ENCODE measurements at regions of chrX and their contacts with region 1.

Region 1: DNA sequence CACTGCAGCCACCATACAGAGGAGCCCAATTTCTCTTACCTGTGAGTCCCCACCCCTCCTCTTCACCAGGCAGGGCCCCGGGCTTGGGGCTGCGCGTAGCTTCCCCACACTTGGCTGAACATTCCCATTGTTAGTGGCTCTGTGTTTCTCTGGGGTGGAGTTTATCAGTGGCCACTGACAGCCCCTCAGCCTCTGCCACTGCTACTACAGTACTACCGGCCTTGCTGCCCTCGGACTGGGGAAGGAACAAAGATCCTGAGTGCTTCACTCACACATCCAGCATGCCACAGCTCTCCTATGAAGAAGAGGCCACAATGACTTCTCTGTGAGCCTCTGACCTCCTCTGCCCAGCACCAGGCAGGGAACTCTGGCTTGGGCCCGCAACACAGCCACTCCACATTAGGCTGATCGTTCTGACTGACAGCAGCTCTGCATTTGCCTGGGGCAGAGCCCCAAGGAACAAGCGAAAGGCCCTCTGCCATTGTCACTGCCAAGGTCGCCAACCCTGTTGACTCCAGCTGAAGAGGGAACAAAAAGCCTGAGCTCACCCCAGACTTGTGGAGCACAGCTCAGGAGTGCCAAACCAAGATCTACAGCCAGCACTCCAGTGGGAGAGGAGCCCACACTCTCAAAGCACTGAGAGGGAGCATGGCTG is 24.0 kb downstream of the ABCB7 start:
- DNase-seq: peak in 1 of 2 donors; percentile 45
- ATAC-seq: peak in 3 of 4 donors; percentile 48 to 69 (median 64)
- H3K4me3 ChIP-seq: no peak overlapping the region
- H3K27ac ChIP-seq: no peak overlapping the region
- H3K4me1 ChIP-seq: peaks cover 3% of the 10 kb centered on the region
- H3K27me3 ChIP-seq: peaks cover 0 to 8% (median 0%) of the 10 kb centered on the region in 3 donors
- CTCF ChIP-seq: no peak

Region 2: DNA sequence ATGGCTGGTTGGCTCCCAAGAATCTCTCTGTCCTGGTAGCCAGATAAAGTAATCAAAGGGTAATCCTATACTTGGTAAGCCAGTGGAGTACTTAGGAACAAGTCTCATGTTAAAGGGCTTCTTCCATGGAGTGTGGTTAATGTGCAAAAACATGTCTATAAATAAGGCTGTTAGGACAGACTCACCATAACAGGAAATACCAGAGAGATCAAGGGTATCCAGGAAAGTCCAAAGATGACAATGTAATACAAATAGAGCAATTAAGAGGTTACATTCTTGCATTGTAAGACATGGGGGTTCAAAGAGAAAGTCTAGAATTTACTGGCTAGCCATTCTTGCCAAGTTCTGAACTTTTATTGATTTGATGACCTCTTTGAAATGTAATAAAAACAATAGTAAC is 890.0 kb before region 1 on chrX:
- intact Hi-C with region 1: loop called in 1 of 2 experiments (anchors 5 kb)
- DNase-seq: no peak
- ATAC-seq: peak; percentile 80 to 83 (median 81)
- H3K4me3 ChIP-seq: no peak overlapping the region
- H3K27ac ChIP-seq: peak overlapping the region; percentile 79
- H3K4me1 ChIP-seq: no peaks in the 10 kb centered on the region
- H3K27me3 ChIP-seq: no peaks in the 10 kb centered on the region
- CTCF ChIP-seq: no peak

Measured in psoas muscle (tissue), 8 donors.